Activated CD4-positive, alpha-beta memory T cell treated with anti-CD3 and anti-CD28 coated beads for 36 hours (primary cell): ENCODE measurements at regions of chr19 and their contacts with region 1.

Region 1: GRCh38 chr19:51441410-51442390 is 16.6 kb downstream of the SIGLEC8 start:
- DNase-seq: peak; percentile 97
- H3K4me3 Mint-ChIP-seq: peak overlapping the region; percentile 81
- H3K27ac Mint-ChIP-seq: peak overlapping the region; percentile 97
- H3K4me1 Mint-ChIP-seq: peaks cover 60% of the 10 kb centered on the region
- H3K27me3 Mint-ChIP-seq: peaks cover 2% of the 10 kb centered on the region

Region 2: DNA sequence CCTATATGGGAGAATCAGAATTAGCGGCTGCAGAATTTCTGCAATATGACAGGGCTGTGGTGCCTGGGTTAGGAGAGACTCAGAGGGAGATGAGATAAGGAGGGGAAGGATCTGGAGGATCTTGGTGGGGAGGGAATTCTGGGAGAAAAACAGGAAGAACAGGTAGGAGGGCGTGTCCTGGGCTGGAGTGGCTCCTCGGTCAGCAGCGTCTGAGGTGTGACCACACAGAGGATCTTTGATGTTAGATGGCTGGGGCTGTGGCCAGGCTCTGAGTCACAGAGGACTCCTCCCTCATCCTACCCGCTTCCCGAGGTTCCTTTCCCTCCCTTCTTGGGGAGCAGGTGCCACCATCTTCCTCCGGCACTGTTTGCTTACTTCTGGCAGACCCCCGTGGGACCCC is 465.9 kb before region 1 on chr19:
- CTCF ChIA-PET with region 1: no interaction called
- POLR2A ChIA-PET with region 1: no interaction called
- intact Hi-C with region 1: no loop called
- DNase-seq: no peak
- H3K4me3 Mint-ChIP-seq: no peak overlapping the region
- H3K27ac Mint-ChIP-seq: no peak overlapping the region
- H3K4me1 Mint-ChIP-seq: no peaks in the 10 kb centered on the region
- H3K27me3 Mint-ChIP-seq: peaks cover 26% of the 10 kb centered on the region

Region 3: DNA sequence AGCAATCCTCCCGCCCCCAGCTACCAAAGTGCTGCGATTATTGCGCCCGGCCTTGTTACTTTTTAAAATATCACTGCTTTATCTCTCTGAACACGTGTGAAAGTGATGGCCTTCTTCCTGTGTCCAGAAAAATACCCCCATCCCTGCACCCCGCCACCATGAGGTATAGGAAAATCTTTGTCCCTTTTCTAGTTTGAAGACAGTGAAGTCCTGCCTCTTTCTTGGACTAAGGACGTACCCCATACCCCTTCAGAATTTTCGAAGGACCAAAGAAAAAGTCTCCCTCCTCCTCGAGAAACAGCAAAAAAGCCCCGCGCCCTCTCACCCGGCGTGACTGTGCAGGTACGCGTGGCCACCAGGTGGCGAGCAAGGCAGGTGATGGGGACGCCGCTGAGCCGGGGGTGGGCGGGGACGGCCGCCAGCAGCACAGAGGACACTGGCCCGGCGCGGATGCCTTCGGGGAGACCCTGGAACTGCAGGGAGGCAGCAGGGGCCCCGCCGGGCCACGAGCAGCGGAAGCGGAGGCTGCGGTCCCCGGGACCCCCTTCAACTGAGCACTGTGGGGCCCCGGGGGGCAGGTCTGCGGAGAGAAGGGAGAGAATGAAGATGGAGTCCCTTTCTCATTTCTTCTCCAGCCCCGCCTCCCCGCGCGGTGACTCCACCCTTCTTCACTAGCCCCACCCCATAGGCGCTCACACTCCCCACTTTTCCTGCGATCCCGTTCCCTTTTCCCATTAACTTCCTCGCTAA is 103.0 kb before region 1 on chr19:
- CTCF ChIA-PET with region 1: interaction called, 6 read pairs
- POLR2A ChIA-PET with region 1: no interaction called
- intact Hi-C with region 1: loop called (anchors 1 kb)
- DNase-seq: peak; percentile 92
- H3K4me3 Mint-ChIP-seq: peak overlapping the region; percentile 85
- H3K27ac Mint-ChIP-seq: no peak overlapping the region
- H3K4me1 Mint-ChIP-seq: peaks cover 15% of the 10 kb centered on the region
- H3K27me3 Mint-ChIP-seq: no peaks in the 10 kb centered on the region

Region 4: DNA sequence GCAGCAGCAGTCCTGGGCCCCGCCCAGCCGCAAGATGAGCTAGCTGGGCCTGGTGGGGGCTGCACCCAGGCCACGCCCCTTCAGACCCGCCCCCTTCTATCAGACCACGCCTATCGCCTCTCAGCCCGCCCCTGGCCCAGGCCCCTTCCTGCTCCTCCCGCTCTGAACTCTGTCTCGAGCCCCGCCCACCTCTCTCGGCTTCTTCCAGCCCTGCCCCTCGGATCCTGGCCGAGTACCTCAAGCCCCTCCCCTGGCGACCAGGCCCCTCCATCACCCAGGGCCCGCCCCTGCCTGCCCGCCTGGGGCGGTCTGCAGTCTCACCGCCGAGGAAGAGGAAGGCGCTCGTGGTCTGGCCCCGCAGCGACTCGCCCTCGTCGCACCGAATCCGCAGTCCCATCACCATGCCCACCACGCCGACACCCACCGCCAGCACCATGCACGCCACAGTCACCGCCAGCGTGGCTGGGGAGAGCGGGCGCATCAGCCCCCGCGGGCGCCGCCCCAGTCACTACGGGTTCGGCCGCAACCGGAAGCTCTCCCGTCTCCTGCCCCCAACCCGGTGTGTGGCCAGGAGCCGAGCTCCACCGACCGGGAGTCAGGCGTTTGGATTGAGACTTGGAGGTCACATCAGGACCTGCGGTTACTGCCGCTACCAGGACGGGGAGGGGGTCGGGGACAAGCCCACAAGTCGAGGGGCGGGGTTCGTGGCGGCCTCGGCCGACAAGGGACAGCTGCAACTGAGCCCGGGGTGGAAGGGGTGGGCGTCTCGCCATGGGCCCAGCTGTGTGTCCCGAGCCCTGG is 73.9 kb before region 1 on chr19:
- CTCF ChIA-PET with region 1: interaction called, 3 read pairs
- POLR2A ChIA-PET with region 1: interaction called, 5 read pairs
- intact Hi-C with region 1: loop called (anchors 1 kb)
- DNase-seq: peak; percentile 100
- H3K4me3 Mint-ChIP-seq: peak overlapping the region; percentile 99
- H3K27ac Mint-ChIP-seq: peak overlapping the region; percentile 96
- H3K4me1 Mint-ChIP-seq: peaks cover 57% of the 10 kb centered on the region
- H3K27me3 Mint-ChIP-seq: no peaks in the 10 kb centered on the region

Region 5: DNA sequence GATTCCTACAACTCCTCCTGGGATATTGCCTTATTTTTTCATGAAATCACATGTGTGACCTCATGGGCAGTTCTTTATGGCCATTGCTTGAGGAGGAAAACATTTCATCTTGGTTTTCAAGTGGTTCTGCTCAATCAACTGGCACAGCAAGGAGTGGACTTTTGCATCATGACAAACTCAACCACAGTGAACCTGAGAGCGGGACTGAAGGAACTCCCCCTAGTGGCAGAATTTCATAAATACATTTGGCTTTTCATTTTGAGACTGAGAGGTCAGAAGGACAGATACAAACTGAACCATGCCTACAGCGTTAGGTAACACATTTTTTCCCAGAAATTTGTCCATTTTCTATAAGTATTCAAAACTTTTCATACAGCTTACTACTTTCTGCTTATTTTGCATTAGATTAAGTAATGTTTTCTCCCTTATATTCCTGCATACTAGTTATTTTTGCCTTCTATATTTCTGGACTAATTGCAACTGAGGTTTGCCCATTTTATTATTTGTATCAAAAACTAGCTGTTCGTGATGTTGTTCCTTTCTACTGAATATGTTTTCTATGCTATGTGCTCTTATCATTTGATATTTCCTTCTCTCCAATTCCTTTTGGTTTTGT is 73.3 kb after region 1 on chr19:
- CTCF ChIA-PET with region 1: interaction called, 25 read pairs
- POLR2A ChIA-PET with region 1: no interaction called
- intact Hi-C with region 1: no loop called
- DNase-seq: peak; percentile 28
- H3K4me3 Mint-ChIP-seq: no peak overlapping the region
- H3K27ac Mint-ChIP-seq: no peak overlapping the region
- H3K4me1 Mint-ChIP-seq: peaks cover 12% of the 10 kb centered on the region
- H3K27me3 Mint-ChIP-seq: peaks cover 25% of the 10 kb centered on the region

Region 6: DNA sequence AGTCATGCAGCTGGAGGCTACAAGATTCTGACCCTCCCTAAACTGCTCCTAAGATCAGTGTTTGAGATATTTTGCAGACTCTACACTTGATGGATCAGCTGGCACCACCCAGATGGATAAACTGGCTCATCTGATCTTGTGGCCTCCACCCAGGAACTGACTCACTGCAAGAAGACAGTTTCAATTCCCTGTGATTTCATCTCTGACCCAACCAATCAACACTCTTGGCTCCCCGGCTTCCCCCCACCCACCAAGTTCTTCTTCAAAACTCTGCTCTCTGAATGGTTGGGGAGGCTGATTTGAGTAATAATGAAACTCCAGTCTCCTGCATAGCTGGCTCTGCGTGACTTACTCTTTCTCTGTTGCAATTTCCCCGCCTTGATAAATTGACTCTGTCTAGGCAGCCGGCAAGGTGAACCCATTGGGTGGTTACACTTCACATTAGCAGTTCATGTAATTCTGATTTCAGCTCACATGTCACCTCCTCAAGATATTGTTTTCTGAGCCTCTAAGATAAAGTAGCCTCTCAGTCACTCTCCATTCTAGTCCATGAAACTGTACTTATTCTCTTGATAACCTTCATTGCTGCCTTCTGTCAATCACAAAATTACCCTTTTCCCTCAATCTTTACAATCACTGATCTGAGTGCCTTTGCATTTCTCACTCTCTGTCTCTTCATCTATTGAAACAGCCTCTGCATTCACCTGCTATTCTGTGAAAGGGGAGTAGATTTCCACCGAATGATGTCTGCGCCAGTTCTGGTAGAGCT is 343.4 kb after region 1 on chr19:
- CTCF ChIA-PET with region 1: no interaction called
- POLR2A ChIA-PET with region 1: no interaction called
- intact Hi-C with region 1: loop called (anchors 1 kb)
- DNase-seq: peak; percentile 81
- H3K4me3 Mint-ChIP-seq: no peak overlapping the region
- H3K27ac Mint-ChIP-seq: no peak overlapping the region
- H3K4me1 Mint-ChIP-seq: no peaks in the 10 kb centered on the region
- H3K27me3 Mint-ChIP-seq: peaks cover 6% of the 10 kb centered on the region